HEK293 (cell line): ENCODE measurements at regions of chr9 and their contacts with region 1.

Region 1: GRCh38 chr9:6424940-6425339 is 11.9 kb downstream of the UHRF2 start:
- H3K4me3 ChIP-seq: no peak overlapping the region
- H3K27ac ChIP-seq: no peak overlapping the region
- H3K4me1 ChIP-seq: peaks cover 2% of the 10 kb centered on the region; the same call in 1 of the 2 replicates
- CTCF ChIP-seq: no peak

Region 2: GRCh38 chr9:6367128-6367890 is 57.6 kb before region 1 on chr9:
- CTCF ChIA-PET with region 1: no interaction called
- POLR2A ChIA-PET with region 1: no interaction called
- H3K4me3 ChIP-seq: no peak overlapping the region
- H3K27ac ChIP-seq: no peak overlapping the region
- H3K4me1 ChIP-seq: no peaks in the 10 kb centered on the region
- CTCF ChIP-seq: no peak

Region 3: DNA sequence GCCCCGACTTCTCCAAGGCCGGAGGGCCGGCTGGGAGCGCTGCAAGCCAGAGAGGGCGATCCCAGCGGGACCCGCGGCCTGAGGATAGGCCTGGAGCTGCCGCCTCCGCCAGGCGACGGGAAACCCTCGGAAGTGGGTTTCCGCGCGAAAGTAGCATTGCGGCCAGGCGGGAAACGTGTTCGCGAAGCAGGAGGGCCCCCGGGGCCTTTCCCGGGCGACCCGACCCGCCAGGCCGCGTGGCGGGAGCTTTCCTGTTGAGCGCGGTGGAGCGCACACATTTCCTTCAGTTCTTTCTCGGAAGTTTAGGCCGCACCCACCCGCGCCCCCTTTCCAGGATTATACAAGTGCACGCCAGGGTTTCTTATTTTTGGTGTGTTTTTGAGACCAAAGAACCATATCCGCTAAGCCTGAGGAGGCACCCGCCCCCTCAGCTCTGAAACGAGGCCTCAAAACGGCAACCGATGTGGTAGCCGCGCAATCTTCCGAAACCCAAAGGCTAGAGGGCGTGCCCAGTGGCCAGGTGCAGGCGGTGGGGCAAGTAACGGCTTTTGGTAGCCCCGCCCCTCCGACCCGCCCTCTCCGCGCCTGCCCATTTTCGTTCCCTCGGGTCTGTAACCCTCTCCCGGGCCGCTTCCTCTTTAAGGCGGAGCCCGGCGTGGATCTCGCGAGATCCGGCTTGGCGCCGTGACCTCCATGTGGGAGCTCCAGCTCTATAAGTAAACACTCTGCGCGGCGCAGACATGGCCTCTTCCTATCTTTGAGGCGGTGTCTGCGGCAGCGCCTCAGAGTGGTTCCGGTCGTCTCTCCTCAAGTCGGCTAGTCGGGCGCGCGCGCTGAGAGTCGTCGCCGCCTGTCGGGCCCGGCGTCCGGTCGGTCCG is 12.2 kb before region 1 on chr9 and contains the start of gene UHRF2:
- CTCF ChIA-PET with region 1: interaction called, 4 read pairs
- POLR2A ChIA-PET with region 1: interaction called, 11 read pairs
- H3K4me3 ChIP-seq: peak within 1 kb of the TSS; percentile 90
- H3K27ac ChIP-seq: peak within 1 kb of the TSS; percentile 92
- H3K4me1 ChIP-seq: no peaks in the 10 kb centered on the region
- CTCF ChIP-seq: no peak